MCF 10A (cell line): ENCODE measurements at regions of chr6 and their contacts with region 1.

Region 1: DNA sequence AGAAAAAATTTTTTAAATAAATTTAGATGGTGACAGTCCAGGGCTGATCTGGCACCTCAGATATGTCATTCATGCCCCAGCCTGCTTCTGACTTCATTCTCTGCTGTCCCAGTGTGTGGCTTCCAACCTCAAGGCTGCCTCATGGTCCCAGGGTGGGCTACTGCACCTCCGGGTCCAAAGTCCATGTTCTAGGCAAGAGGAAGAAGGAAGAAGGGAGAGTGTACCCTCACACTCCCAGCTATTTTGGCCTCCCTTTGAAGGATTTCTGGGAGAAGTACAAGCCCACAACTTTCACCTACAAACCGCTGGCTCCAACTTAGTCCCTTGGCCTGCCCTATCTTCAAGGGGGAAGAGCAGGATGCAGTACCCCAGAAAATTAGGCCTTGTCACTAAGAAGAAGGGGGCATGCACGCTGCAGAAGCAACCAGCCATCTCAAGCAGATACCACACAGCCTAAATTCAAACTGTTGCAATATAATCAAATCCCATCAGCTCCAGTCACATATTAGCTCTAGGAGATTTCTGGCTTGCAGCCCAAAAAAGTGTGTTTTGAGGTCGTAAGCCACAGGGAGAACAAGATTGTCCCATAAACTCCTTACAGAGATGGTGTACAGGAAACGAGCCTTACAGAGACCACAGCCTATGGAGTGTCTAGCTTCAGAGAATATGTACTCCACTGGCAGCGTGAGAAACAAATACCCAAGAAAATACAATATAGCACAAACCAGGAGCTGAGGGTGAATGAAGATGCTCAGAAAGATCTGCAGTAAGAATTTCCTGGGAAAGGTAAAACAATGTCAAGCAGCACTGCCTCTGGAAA is 906 bp upstream of the BTN3A2 start:
- DNase-seq: peak; percentile 8
- H3K4me3 Mint-ChIP-seq: no peak overlapping the region
- H3K27ac Mint-ChIP-seq: no peak overlapping the region
- H3K4me1 Mint-ChIP-seq: peaks cover 7% of the 10 kb centered on the region
- H3K27me3 Mint-ChIP-seq: no peaks in the 10 kb centered on the region
- CTCF ChIP-seq: no peak

Region 2: GRCh38 chr6:25499615-25500235 is 864.4 kb before region 1 on chr6:
- CTCF ChIA-PET with region 1: no interaction called
- POLR2A ChIA-PET with region 1: no interaction called
- intact Hi-C with region 1: no loop called
- DNase-seq: no peak
- H3K4me3 Mint-ChIP-seq: no peak overlapping the region
- H3K27ac Mint-ChIP-seq: no peak overlapping the region
- H3K4me1 Mint-ChIP-seq: no peaks in the 10 kb centered on the region
- H3K27me3 Mint-ChIP-seq: no peaks in the 10 kb centered on the region
- CTCF ChIP-seq: no peak

Region 3: DNA sequence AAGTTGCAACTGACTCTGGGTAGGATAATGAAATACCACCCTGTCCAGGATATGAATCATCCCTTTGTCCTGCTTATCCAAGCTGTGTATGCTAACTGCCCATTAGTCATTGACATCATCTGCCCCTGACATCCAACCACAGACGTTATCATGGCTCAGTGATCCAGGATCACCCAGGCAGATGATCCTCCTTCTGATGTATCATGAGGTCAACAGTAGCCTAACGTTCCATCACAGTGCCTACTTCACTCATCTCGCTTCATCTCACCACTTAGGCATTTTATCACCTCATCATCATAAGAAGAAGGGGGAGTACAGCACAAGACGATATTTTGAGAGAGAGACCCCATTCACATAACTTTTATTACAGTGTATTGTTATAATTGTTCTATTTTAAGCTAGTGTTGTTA is 12.5 kb before region 1 on chr6:
- CTCF ChIA-PET with region 1: no interaction called
- POLR2A ChIA-PET with region 1: interaction called, 10 read pairs
- intact Hi-C with region 1: no loop called
- DNase-seq: peak; percentile 90
- H3K4me3 Mint-ChIP-seq: no peak overlapping the region
- H3K27ac Mint-ChIP-seq: peak overlapping the region; percentile 25
- H3K4me1 Mint-ChIP-seq: peaks cover 6% of the 10 kb centered on the region
- H3K27me3 Mint-ChIP-seq: no peaks in the 10 kb centered on the region
- CTCF ChIP-seq: no peak

Region 4: GRCh38 chr6:26383624-26384417 is 19.7 kb after region 1 on chr6:
- CTCF ChIA-PET with region 1: no interaction called
- POLR2A ChIA-PET with region 1: interaction called, 10 read pairs
- intact Hi-C with region 1: no loop called
- DNase-seq: peak; percentile 73
- H3K4me3 Mint-ChIP-seq: peak overlapping the region; percentile 88
- H3K27ac Mint-ChIP-seq: peak overlapping the region; percentile 92
- H3K4me1 Mint-ChIP-seq: peaks cover 35% of the 10 kb centered on the region
- H3K27me3 Mint-ChIP-seq: no peaks in the 10 kb centered on the region
- CTCF ChIP-seq: no peak

Region 5: GRCh38 chr6:26545627-26546026 is 181.5 kb after region 1 on chr6:
- CTCF ChIA-PET with region 1: no interaction called
- POLR2A ChIA-PET with region 1: no interaction called
- intact Hi-C with region 1: no loop called
- DNase-seq: no peak
- H3K4me3 Mint-ChIP-seq: no peak overlapping the region
- H3K27ac Mint-ChIP-seq: no peak overlapping the region
- H3K4me1 Mint-ChIP-seq: peaks cover 2% of the 10 kb centered on the region
- H3K27me3 Mint-ChIP-seq: no peaks in the 10 kb centered on the region
- CTCF ChIP-seq: no peak

Region 6: GRCh38 chr6:26640806-26641205 is 276.7 kb after region 1 on chr6:
- CTCF ChIA-PET with region 1: no interaction called
- POLR2A ChIA-PET with region 1: no interaction called
- intact Hi-C with region 1: no loop called
- DNase-seq: no peak
- H3K4me3 Mint-ChIP-seq: no peak overlapping the region
- H3K27ac Mint-ChIP-seq: no peak overlapping the region
- H3K4me1 Mint-ChIP-seq: no peaks in the 10 kb centered on the region
- H3K27me3 Mint-ChIP-seq: no peaks in the 10 kb centered on the region
- CTCF ChIP-seq: no peak